ENCODE measurements at regions of chr2 and their contacts with region 1.

Region 1: DNA sequence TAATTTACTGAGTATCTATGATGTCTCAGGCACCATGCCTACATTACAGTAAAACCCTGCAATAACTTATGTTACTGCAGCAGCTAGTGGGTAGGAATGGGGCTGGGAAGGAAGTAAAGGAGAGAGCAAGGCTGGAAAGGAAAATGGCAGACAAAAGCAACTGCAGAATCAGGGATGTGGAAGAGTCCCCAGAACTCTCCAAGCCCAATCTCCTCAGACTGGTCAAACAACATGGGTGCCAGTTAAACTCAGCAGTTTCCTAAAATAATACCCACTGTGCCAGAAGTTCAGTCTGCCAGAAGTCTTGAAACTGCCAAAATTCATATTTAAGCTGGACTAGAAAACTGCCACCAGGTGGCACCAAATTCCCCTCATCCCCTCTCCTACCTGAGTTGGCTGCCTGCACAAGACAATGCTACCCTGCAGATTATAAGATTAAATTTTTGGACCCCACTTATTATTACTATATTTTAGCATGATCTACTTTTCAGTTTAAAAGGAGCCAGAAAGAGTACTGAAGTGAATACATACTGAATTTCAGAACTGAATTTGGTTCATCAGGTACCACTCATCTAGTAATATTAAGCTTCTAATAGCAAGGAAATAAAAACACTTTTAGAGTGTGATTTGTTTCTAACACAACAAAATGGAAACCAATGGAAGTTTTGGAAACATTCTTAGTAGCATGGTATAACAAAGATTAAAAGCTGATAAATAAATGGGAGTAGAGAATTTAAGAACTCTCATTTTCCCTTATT is 86.8 kb upstream of the DNER start:
- H3K4me3 Mint-ChIP-seq: no peak overlapping the region
- H3K27ac Mint-ChIP-seq: no peak overlapping the region
- H3K4me1 Mint-ChIP-seq: no peaks in the 10 kb centered on the region
- H3K27me3 Mint-ChIP-seq: no peaks in the 10 kb centered on the region

Region 2: GRCh38 chr2:229775614-229776313 is 25.4 kb before region 1 on chr2:
- intact Hi-C with region 1: no loop called
- H3K4me3 Mint-ChIP-seq: no peak overlapping the region
- H3K27ac Mint-ChIP-seq: no peak overlapping the region
- H3K4me1 Mint-ChIP-seq: no peaks in the 10 kb centered on the region
- H3K27me3 Mint-ChIP-seq: no peaks in the 10 kb centered on the region

Region 3: GRCh38 chr2:229910832-229911412 is 109.7 kb after region 1 on chr2:
- intact Hi-C with region 1: loop called (anchors 10 kb)
- H3K4me3 Mint-ChIP-seq: no peak overlapping the region
- H3K27ac Mint-ChIP-seq: no peak overlapping the region
- H3K4me1 Mint-ChIP-seq: peaks cover 23% of the 10 kb centered on the region
- H3K27me3 Mint-ChIP-seq: no peaks in the 10 kb centered on the region